ENCODE measurements at regions of chr11 and their contacts with region 1.

Region 1: DNA sequence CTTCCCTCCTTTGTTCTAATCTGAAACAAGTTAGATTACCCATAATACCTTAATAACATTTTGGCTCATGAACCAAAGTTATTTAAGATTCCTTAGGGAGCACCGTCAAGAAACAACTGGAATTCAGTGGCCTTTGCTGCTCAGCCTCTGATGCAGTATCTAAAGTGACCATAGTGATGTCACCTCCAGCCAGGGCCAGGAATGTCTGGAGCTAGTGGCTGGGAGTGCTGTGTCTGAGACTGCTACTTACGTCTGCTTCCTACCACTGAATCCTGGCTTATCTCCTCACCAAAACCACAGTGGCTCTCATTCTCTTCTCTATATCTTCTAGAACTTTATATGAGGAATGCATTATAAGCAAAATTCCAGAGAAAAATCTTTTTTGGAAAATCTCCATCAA is 658.0 kb downstream of the DLG2 start:
- DNase-seq: no peak
- ATAC-seq: no peak
- H3K4me3 ChIP-seq: no peak overlapping the region
- H3K4me3 Mint-ChIP-seq: no peak overlapping the region
- H3K27ac ChIP-seq: no peak overlapping the region
- H3K27ac Mint-ChIP-seq: no peak overlapping the region
- H3K4me1 ChIP-seq: no peaks in the 10 kb centered on the region
- H3K4me1 Mint-ChIP-seq: no peaks in the 10 kb centered on the region
- H3K27me3 ChIP-seq: no peaks in the 10 kb centered on the region
- H3K27me3 Mint-ChIP-seq: no peaks in the 10 kb centered on the region
- CTCF ChIP-seq: no peak

Region 2: GRCh38 chr11:84906995-84907394 is 62.1 kb before region 1 on chr11:
- CTCF ChIA-PET with region 1: no interaction called
- POLR2A ChIA-PET with region 1: no interaction called
- intact Hi-C with region 1: loop called in 1 of 2 experiments (anchors 2 kb)
- DNase-seq: no peak
- ATAC-seq: no peak
- H3K4me3 ChIP-seq: no peak overlapping the region
- H3K4me3 Mint-ChIP-seq: no peak overlapping the region
- H3K27ac ChIP-seq: no peak overlapping the region
- H3K27ac Mint-ChIP-seq: no peak overlapping the region
- H3K4me1 ChIP-seq: no peaks in the 10 kb centered on the region
- H3K4me1 Mint-ChIP-seq: no peaks in the 10 kb centered on the region
- H3K27me3 ChIP-seq: no peaks in the 10 kb centered on the region
- H3K27me3 Mint-ChIP-seq: no peaks in the 10 kb centered on the region
- CTCF ChIP-seq: no peak